Activated CD4-positive, alpha-beta T cell treated with anti-CD3 and anti-CD28 coated beads for 36 hours (primary cell): ENCODE measurements at regions of chr7 and their contacts with region 1.

Region 1: GRCh38 chr7:91373111-91373800 is 109.0 kb downstream of the FZD1 start:
- DNase-seq: no peak
- ATAC-seq: no peak
- H3K4me3 Mint-ChIP-seq: no peak overlapping the region
- H3K27ac Mint-ChIP-seq: no peak overlapping the region
- H3K4me1 Mint-ChIP-seq: no peaks in the 10 kb centered on the region
- H3K27me3 Mint-ChIP-seq: peaks cover 6% of the 10 kb centered on the region

Region 2: GRCh38 chr7:92279396-92280031 is 906.3 kb after region 1 on chr7:
- CTCF ChIA-PET with region 1: no interaction called
- POLR2A ChIA-PET with region 1: no interaction called
- intact Hi-C with region 1: loop called in 1 of 2 experiments (anchors 5 kb)
- DNase-seq: no peak
- ATAC-seq: no peak
- H3K4me3 Mint-ChIP-seq: no peak overlapping the region
- H3K27ac Mint-ChIP-seq: no peak overlapping the region
- H3K4me1 Mint-ChIP-seq: peaks cover 5% of the 10 kb centered on the region
- H3K27me3 Mint-ChIP-seq: no peaks in the 10 kb centered on the region